Mammary epithelial cell (primary cell): ENCODE measurements at regions of chr5 and their contacts with region 1.

Region 1: GRCh38 chr5:143177263-143177983 is 226.1 kb downstream of the NR3C1 start:
- DNase-seq: peak; percentile 100
- H3K4me3 ChIP-seq: no peak overlapping the region
- H3K27ac ChIP-seq: peak overlapping the region; percentile 97
- H3K4me1 ChIP-seq: peaks cover 29% of the 10 kb centered on the region
- H3K27me3 ChIP-seq: no peaks in the 10 kb centered on the region
- CTCF ChIP-seq: peak; percentile 23 to 30

Region 2: DNA sequence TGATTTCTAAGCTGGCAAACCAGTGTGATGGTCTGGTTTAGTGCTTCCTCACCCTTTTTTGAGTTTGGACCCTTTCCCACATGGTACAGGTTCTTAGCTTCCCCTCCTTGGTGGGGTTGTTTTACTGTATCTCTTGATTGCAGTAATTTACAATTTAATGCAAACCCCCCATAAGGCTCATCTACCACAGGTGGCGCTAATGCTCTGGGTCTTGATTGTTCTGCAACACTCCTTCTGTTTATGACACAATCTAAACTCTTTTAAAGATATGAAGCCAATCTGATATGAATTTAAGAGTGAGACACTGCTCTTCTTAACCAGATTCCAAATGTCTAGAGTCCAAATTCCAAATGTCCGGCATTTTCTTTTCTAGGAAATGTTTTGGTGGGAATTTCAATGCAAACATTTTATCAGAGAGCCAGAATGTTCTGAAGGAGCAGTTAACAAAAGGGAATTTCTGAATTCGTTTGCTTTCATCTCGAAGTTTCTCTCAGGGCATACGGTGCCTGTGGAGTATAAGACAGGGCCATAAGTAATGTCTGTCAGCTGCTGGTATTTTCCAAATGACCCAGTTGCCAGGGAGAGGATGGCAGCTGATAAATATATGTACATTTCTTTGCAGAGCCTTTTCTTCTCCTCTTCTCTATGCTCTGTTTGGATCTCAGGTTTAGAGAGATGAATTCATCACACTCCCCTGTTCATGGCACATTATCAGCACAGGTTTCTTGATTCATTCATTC is 160.5 kb before region 1 on chr5:
- CTCF ChIA-PET with region 1: no interaction called
- dilution Hi-C with region 1: no loop called
- in situ Hi-C with region 1: no loop called
- intact Hi-C with region 1: loop called (anchors 5 kb)
- DNase-seq: peak; percentile 33
- H3K4me3 ChIP-seq: no peak overlapping the region
- H3K27ac ChIP-seq: no peak overlapping the region
- H3K4me1 ChIP-seq: peaks cover 5% of the 10 kb centered on the region
- H3K27me3 ChIP-seq: no peaks in the 10 kb centered on the region
- CTCF ChIP-seq: peak; percentile 79 to 80

Region 3: GRCh38 chr5:143086908-143087637 is 90.3 kb before region 1 on chr5:
- CTCF ChIA-PET with region 1: no interaction called
- dilution Hi-C with region 1: no loop called
- in situ Hi-C with region 1: no loop called
- intact Hi-C with region 1: loop called (anchors 5 kb)
- DNase-seq: peak; percentile 78
- H3K4me3 ChIP-seq: no peak overlapping the region
- H3K27ac ChIP-seq: peak overlapping the region; percentile 36
- H3K4me1 ChIP-seq: peaks cover 20% of the 10 kb centered on the region
- H3K27me3 ChIP-seq: no peaks in the 10 kb centered on the region
- CTCF ChIP-seq: no peak

Region 4: GRCh38 chr5:143200781-143201398 is 23.5 kb after region 1 on chr5:
- CTCF ChIA-PET with region 1: no interaction called
- dilution Hi-C with region 1: no loop called
- in situ Hi-C with region 1: no loop called
- intact Hi-C with region 1: loop called (anchors 2 kb)
- DNase-seq: peak; percentile 96
- H3K4me3 ChIP-seq: no peak overlapping the region
- H3K27ac ChIP-seq: peak overlapping the region; percentile 68
- H3K4me1 ChIP-seq: peaks cover 67% of the 10 kb centered on the region
- H3K27me3 ChIP-seq: no peaks in the 10 kb centered on the region
- CTCF ChIP-seq: no peak

Region 5: DNA sequence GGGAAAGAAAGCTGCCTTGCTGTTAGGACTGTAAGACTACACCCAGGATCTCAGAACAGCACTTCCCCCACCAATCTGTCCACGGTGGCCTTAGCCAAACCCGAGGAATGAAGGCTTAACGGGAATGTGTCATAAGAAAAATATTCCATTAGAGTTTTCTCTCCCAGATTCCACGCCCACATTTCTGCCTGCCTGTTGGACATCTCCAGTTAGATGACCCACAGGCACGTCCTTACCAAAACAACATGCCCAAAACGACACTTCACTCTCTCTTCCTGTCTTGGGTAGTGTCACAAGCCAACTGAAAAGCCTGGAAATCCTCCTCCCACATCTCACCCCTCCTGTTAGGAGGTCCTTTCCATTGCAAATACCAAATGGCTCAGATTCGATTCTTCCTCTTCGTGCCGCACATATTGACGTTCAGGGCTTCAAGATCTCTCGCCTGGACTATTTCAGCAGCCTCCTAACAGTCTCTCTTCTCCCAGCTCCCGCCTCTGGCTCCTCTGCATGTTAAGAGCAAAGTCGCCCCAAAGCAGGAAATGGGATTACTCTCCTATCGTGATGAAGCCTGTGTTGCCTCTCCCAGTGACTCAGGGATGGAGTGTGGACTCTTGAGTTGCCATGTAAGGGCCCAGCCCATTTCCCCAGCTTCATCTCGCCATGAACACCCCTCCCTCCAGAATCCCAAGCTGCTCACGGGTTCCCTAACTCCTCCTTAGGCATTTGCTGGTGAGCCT is 66.7 kb after region 1 on chr5:
- CTCF ChIA-PET with region 1: no interaction called
- dilution Hi-C with region 1: no loop called
- in situ Hi-C with region 1: no loop called
- intact Hi-C with region 1: loop called (anchors 1 kb)
- DNase-seq: peak; percentile 95
- H3K4me3 ChIP-seq: peak overlapping the region; percentile 15 to 35 (median 31)
- H3K27ac ChIP-seq: peak overlapping the region; percentile 99
- H3K4me1 ChIP-seq: peaks cover 55% of the 10 kb centered on the region
- H3K27me3 ChIP-seq: no peaks in the 10 kb centered on the region
- CTCF ChIP-seq: no peak

Region 6: DNA sequence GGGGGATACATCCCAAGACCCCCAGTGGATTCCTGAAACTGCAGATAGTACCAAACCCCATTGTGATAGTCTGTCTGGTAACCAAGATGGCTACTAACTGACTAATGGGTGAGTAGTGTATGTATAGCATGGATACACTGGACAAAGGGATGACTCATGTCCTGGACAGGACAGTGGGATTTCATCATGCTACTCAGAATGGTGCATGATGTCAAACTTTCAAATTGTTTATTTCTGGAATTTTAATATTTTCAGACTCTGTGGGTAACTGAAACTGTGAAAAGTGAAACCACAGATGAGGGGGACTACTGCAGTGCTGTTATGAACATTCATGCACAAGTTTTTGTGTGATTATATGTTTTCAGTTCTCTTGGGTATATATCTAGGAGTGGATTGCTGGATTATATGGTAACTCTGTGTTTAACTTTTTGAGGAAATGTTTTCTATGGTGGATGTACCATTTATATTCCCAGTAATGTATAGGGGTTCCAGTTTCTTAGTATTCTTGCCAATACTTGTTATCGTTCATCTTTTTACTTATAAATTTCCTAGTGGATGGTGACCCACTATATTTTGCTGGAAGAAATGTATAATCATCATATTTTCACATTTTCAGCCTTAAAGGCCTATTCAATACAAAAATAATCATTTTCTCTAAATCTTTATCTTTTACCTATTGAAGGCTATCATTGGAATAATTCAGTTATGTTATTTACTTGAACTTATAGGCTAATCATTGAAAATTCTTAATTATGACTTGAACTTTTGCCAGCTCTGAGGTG is 85.2 kb after region 1 on chr5:
- CTCF ChIA-PET with region 1: no interaction called
- dilution Hi-C with region 1: no loop called
- in situ Hi-C with region 1: no loop called
- intact Hi-C with region 1: loop called (anchors 1 kb)
- DNase-seq: peak; percentile 91
- H3K4me3 ChIP-seq: no peak overlapping the region
- H3K27ac ChIP-seq: peak overlapping the region; percentile 97
- H3K4me1 ChIP-seq: peaks cover 32% of the 10 kb centered on the region
- H3K27me3 ChIP-seq: no peaks in the 10 kb centered on the region
- CTCF ChIP-seq: no peak